ENCODE measurements at regions of chr19 and their contacts with region 1.

Region 1: DNA sequence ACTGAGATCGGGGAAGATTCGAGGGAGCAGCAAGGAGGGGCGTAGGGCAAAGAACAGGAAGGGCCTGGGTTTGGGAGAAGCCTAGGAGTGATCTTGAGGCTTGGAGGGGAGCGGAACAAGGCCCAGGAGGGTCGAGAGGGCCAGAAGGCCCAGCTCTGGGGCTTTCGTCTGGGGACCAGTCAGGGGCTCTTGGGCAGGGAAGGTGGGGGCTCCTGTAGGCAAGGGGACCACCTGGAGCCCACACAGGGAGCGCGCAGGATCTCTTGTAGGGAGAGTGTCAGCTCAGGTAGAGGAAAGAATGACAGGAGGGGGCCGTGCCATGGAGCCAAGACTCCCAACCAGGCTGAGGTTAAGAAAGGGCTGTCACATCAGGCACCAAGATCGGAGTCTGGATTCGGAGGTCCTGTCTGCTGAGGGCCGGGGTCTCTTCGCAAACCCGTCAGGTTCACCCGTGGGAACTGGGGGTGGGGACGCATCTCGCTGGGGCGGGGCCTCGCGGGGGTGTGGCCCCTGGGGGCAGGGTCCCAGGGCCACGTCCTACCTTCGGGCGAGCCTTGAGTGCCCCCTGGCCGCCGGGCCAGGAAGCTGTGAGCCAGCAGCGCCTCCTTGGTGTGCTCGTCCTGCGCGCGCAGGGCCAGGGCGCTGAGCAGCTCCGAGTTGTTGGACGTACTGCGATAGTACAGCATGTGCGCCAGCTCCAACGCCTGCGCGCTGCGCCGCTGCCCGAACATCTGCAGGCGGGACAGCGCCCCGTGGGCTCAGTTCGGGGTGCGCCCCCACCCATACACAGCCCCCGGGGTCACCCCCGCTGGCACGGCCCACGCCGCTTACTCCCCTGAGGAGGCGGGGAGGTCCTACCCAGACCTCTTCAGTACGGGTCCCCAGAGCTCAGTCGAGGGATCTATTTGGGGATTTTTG is 8.4 kb downstream of the EMP3 start:
- DNase-seq: peak; percentile 92
- H3K4me3 Mint-ChIP-seq: peak overlapping the region; percentile 86
- H3K27ac Mint-ChIP-seq: peak overlapping the region; percentile 89
- H3K4me1 Mint-ChIP-seq: peaks cover 47% of the 10 kb centered on the region
- H3K27me3 Mint-ChIP-seq: no peaks in the 10 kb centered on the region

Region 2: DNA sequence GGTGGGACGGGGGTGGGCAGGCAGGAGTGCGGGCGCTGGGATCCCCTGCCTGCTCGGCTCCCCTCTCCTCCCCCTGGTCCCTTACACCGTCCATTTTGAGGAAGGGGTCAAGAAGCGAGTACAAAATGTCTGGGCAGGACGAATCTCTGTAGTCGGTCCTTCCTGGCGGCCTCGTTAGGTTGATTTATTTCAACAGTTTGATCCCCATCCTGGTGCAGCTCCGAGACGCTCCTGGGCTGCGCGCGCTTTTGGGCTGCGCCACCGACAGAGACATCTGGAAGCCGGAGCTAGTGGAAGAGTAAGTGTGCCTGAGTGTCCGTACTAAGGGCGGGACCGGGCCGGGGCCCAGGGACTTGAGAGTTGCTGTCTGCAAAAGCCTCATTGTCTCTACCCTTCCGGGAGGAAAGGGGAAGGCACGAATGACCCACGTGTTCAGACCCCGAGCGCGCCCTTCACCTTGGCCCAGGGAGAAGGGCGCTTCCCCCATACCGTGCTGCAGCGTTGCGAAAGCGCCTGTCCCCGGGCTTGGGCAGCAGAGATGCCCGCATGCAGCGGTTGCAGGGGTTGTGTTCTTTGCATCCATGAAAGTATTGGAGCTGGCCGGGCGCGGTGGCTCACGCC is 62.1 kb before region 1 on chr19:
- intact Hi-C with region 1: loop called (anchors 1 kb)
- DNase-seq: no peak
- H3K4me3 Mint-ChIP-seq: peak overlapping the region; percentile 80
- H3K27ac Mint-ChIP-seq: no peak overlapping the region
- H3K4me1 Mint-ChIP-seq: peaks cover 5% of the 10 kb centered on the region
- H3K27me3 Mint-ChIP-seq: peaks cover 16% of the 10 kb centered on the region

Region 3: GRCh38 chr19:48303367-48303766 is 30.4 kb before region 1 on chr19:
- intact Hi-C with region 1: no loop called
- DNase-seq: no peak
- H3K4me3 Mint-ChIP-seq: no peak overlapping the region
- H3K27ac Mint-ChIP-seq: no peak overlapping the region
- H3K4me1 Mint-ChIP-seq: no peaks in the 10 kb centered on the region
- H3K27me3 Mint-ChIP-seq: peaks cover 4% of the 10 kb centered on the region

Region 4: GRCh38 chr19:48368936-48369335 is 35.2 kb after region 1 on chr19:
- intact Hi-C with region 1: no loop called
- DNase-seq: no peak
- H3K4me3 Mint-ChIP-seq: no peak overlapping the region
- H3K27ac Mint-ChIP-seq: no peak overlapping the region
- H3K4me1 Mint-ChIP-seq: peaks cover 7% of the 10 kb centered on the region
- H3K27me3 Mint-ChIP-seq: peaks cover 3% of the 10 kb centered on the region

Region 5: GRCh38 chr19:48398375-48399235 is 64.9 kb after region 1 on chr19:
- intact Hi-C with region 1: loop called (anchors 5 kb)
- DNase-seq: peak; percentile 84
- H3K4me3 Mint-ChIP-seq: no peak overlapping the region
- H3K27ac Mint-ChIP-seq: no peak overlapping the region
- H3K4me1 Mint-ChIP-seq: peaks cover 28% of the 10 kb centered on the region
- H3K27me3 Mint-ChIP-seq: peaks cover 34% of the 10 kb centered on the region

Region 6: GRCh38 chr19:48480558-48481500 is 147.1 kb after region 1 on chr19:
- intact Hi-C with region 1: no loop called
- DNase-seq: peak; percentile 55
- H3K4me3 Mint-ChIP-seq: peak overlapping the region; percentile 72
- H3K27ac Mint-ChIP-seq: peak overlapping the region; percentile 73
- H3K4me1 Mint-ChIP-seq: peaks cover 12% of the 10 kb centered on the region
- H3K27me3 Mint-ChIP-seq: no peaks in the 10 kb centered on the region